ENCODE measurements at regions of chr5 and their contacts with region 1.

Region 1: GRCh38 chr5:177390363-177391300 is 6.4 kb downstream of the SLC34A1 start:
- DNase-seq: peak; percentile 90
- H3K4me3 Mint-ChIP-seq: no peak overlapping the region
- H3K27ac Mint-ChIP-seq: peak overlapping the region; percentile 84
- H3K4me1 Mint-ChIP-seq: peaks cover 34% of the 10 kb centered on the region
- H3K27me3 Mint-ChIP-seq: peaks cover 7% of the 10 kb centered on the region

Region 2: DNA sequence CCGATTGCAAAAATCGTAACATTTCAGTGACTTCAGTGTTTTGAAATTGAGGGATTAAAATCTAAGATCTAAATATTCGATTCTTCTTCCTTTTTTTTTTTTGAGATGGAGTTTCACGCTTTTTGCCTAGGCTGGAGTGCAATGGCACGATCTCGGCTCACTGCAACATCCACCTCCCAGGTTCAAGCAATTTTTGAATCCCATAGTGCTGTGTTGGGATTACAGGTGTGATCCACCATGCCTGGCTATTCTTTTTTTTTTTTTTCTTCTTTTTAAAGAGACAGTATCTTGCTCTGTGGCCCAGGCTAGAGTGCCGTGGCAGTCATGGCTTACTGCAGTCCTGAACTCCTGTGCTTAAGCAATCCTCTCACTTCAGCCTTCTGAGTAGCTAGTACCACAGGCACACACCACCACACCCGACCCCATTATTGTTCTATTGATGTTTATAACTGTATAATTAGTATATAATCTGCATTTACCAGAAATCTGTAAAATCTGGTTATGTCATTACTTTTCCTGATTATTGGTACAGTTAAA is 214.4 kb before region 1 on chr5:
- CTCF ChIA-PET with region 1: no interaction called
- POLR2A ChIA-PET with region 1: no interaction called
- DNase-seq: no peak
- H3K4me3 Mint-ChIP-seq: no peak overlapping the region
- H3K27ac Mint-ChIP-seq: no peak overlapping the region
- H3K4me1 Mint-ChIP-seq: peaks cover 12% of the 10 kb centered on the region
- H3K27me3 Mint-ChIP-seq: no peaks in the 10 kb centered on the region

Region 3: DNA sequence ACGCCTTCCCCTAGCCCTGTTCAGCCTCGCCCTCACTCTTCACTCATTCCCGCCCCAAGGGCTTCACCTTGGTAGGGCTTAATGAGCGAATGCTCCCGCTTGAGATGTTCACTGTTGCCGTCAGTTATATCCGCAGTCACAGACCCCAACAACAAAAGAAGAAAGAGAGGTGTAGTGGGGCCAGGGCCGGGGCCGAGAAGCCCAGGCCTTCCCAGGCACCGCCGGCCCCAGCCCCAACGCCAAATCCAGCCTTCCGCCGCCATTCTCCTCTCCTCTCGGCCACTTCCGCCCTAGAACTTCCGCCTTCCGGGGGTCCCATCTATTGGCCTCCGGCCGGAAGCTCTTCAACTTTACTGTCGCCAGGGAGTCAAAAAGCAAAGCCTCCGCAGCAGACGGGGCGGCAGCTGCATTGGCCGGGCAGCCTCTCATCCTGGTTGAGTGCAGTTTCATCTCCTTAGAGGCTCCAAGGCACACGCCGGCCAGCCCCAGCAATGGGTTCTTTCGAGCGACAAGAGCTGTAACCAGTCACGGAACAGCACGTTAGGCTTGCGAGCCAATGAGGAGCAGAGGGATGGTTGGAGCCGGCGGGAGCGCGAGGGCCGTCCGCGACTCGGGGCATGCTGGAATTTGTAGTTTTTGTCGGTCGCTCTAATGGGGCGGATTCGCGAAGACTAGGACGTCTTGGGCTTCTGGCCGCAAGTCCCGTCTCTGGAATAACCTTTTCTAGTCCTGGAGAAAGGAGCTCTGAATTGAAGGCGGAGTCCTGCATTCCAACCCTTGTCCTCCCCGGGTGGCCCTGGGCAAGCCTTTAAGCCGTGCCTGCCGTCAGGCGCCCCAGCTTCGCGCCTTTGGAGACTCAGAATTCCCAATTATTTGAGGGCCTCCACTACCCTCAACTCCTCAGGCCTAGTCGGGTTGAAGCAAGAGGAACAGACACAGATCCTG is 39.0 kb before region 1 on chr5 and contains the start of gene LMAN2:
- CTCF ChIA-PET with region 1: interaction called, 26 read pairs
- POLR2A ChIA-PET with region 1: no interaction called
- DNase-seq: peak; percentile 95
- H3K4me3 Mint-ChIP-seq: peak within 1 kb of the TSS; percentile 93
- H3K27ac Mint-ChIP-seq: peak within 1 kb of the TSS; percentile 100
- H3K4me1 Mint-ChIP-seq: peaks cover 75% of the 10 kb centered on the region
- H3K27me3 Mint-ChIP-seq: no peaks in the 10 kb centered on the region
- total RNA-seq, gene LMAN2: 123 to 132 TPM

Region 4: DNA sequence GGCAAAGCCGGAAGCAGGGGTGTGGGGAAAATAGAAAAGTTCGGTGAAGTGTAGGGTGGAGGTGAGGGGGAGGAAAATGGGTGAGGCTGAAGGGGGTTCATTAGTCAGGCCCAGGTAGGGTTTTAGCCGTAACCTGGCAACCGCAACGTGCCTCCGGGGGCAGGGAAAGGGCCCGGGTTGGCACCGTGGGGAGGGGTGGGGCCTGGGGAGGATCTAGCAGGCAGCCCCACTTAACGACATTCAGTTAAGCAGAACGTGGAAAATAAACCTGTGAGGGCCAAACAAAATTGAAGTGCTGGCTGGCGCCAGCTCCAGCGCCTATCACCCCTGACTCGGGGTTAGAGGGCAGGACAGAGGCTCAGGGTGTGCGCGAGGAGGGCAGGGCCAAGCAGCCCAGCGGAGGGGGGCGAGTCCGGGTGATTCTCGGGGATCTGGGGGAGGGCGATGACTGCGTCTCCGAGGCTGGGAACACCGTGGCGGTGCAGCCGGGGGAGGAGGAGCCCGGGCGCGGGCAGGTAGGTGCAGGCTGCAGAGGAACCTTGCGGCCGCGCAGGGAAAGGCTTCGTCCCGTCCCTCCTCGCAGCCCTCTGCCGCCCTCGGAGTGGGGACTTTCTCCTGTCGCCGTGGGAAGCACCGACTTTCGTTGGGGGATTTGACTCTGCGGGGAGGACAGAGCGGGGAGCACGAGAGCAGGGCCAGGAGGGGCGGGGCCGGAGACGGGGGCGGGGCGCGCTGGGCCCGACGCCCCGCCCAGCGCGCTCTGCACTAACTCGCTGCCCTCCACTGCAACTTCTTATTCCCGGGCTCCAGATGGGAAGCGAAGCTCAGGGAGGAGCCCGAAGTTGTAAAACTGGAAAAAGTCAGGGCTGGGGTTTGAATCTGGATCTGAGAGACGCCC is 27.8 kb before region 1 on chr5:
- CTCF ChIA-PET with region 1: interaction called, 26 read pairs
- POLR2A ChIA-PET with region 1: no interaction called
- DNase-seq: peak; percentile 57
- H3K4me3 Mint-ChIP-seq: peak overlapping the region; percentile 71
- H3K27ac Mint-ChIP-seq: peak overlapping the region; percentile 84
- H3K4me1 Mint-ChIP-seq: peaks cover 71% of the 10 kb centered on the region
- H3K27me3 Mint-ChIP-seq: no peaks in the 10 kb centered on the region

Region 5: DNA sequence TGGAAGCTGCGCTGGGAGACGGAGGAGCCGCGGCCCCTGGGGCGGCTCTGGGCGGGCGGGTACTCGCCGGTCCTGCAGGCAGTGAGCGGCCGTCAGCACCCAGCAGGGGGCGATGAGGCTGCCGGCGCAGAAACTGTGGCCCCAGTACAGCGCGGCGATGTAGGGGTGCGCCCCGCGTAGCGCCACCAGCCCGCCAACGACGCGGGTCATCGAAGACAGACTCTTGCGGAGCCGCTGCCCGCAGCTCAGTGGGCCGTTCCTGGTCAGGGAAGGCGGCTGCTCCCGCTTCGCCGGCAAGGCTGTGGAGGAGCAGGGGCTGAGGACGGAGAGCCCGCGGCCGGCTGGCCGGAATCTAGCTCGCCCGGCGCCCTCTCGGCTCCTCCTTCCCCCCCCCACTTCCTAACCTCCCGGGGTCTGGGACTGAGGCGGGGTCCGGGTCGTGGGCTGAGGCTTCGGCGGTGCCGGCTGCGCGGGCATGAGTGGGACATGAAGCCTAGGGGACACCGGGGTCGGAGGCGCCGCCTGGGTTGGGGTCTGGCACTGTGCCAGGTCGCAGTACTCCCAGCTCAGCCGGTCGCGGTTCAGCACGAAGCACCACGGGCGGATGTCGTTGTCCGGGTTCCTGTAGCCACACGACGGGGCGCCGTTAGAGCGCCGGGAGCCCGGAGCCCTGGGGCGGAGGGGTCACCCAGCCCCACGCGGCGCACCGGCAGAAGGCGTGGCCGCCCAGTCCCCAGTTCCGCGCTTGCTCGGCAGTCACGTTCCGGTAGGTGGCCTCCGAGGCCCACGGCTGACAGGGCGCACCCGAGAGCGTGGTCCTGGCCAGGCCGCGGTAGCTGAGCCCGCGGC is 13.4 kb after region 1 on chr5:
- CTCF ChIA-PET with region 1: interaction called, 156 read pairs
- POLR2A ChIA-PET with region 1: no interaction called
- DNase-seq: peak; percentile 87
- H3K4me3 Mint-ChIP-seq: peak overlapping the region; percentile 64
- H3K27ac Mint-ChIP-seq: peak overlapping the region; percentile 36
- H3K4me1 Mint-ChIP-seq: peaks cover 36% of the 10 kb centered on the region
- H3K27me3 Mint-ChIP-seq: peaks cover 30% of the 10 kb centered on the region

Region 6: DNA sequence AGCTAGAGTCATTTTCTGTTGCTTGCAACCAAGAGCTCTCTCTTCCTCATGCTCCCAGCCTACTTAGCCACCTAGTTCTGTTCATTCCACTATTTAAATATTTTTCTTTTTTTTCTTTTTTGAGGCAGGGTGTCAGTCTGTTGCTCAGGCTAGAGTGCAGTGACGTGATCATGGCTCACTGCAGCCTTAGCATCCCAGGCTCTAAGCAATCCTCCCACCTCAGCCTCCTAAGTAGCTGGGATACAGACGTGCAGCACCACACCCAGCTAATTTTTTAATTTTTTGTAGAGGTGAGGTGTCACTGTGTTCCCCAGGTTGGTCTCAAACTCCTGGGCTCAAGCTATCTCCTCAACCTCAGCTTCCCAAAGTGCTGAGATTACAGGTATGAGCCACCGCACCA is 23.8 kb after region 1 on chr5:
- CTCF ChIA-PET with region 1: interaction called, 19 read pairs
- POLR2A ChIA-PET with region 1: no interaction called
- DNase-seq: no peak
- H3K4me3 Mint-ChIP-seq: no peak overlapping the region
- H3K27ac Mint-ChIP-seq: no peak overlapping the region
- H3K4me1 Mint-ChIP-seq: peaks cover 40% of the 10 kb centered on the region
- H3K27me3 Mint-ChIP-seq: no peaks in the 10 kb centered on the region

Region 7: DNA sequence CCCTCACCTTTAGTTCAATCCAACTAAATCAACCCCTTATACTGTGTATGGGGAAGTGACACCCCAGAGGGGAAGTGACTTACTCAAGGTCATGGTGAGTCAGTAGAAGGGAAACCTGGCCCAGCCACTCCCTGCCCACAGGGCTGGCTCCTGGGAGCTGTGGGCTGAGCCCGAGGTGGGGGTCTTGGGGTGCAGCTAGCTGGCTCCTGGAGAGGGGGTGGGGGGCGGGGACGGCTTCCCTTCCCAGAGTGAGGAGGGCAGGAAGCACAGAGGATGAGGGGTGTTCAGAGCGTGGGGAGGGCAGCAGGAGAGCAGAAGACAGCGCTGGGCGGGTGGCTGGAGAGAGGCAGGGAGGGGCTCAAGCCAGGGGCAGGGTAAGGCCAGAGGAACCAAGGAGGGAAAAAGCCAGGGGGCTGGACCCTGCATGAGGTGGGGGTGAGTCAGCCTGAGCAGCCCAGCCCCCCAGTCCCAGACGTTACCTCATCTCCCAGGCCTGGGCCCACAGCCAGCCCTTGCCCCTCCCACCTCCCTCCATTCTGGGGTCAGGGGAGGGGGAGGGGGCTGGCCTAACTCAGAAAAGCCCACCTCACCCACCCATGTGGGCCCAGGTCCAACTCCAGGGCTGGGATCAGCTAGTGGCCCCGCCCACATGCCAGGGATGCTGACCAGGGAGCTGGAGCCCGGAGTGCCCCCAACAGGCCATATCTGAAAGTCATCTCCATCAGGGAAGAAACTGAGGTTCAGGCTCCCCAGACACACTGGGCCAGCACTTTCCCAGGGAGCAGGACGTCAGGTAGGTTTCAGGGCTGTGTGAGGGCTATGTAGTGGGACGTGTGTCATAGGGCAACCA is 103.9 kb after region 1 on chr5:
- CTCF ChIA-PET with region 1: interaction called, 36 read pairs
- POLR2A ChIA-PET with region 1: no interaction called
- DNase-seq: peak; percentile 33
- H3K4me3 Mint-ChIP-seq: no peak overlapping the region
- H3K27ac Mint-ChIP-seq: peak overlapping the region; percentile 75
- H3K4me1 Mint-ChIP-seq: peaks cover 48% of the 10 kb centered on the region
- H3K27me3 Mint-ChIP-seq: peaks cover 14% of the 10 kb centered on the region

Region 8: GRCh38 chr5:177509381-177509951 is 118.8 kb after region 1 on chr5 and contains the start of gene DOK3:
- CTCF ChIA-PET with region 1: interaction called, 19 read pairs
- POLR2A ChIA-PET with region 1: no interaction called
- DNase-seq: no peak
- H3K4me3 Mint-ChIP-seq: no peak within 1 kb of the TSS
- H3K27ac Mint-ChIP-seq: no peak within 1 kb of the TSS
- H3K4me1 Mint-ChIP-seq: peaks cover 6% of the 10 kb centered on the region
- H3K27me3 Mint-ChIP-seq: no peaks in the 10 kb centered on the region
- total RNA-seq, gene DOK3: 2.9 to 3.9 TPM